CD14-positive monocyte (primary cell): ENCODE measurements at regions of chr10 and their contacts with region 1.

Region 1: DNA sequence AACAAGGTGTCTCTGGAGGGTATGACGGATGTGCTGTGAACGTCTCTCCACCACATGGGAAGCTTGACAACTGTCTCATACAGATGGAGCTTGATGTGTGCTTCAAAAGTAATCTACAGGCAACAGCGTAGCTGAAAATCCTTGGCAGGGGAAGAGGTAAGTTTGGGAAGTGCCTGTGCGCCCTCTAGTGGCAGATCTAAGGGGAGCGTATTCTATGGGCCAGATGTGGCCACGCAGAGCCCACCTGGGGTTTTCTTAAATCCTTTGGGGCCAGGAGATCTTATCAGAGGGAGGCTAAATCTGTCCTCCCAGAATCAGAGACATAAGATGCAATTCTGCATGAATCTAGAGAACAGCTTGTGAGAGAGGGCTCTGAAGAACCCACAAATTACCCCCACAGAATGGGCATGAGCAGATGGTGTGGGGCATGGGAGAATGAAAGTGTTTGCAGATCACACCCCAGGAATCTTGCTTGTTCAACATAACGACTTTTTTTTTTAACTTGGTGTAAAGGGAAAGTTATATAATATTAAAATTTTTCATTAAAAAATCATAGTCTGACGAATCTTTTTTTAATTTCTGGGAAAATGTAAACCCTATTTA is 91.2 kb upstream of the MPP7 start:
- DNase-seq: peak; percentile 67 to 79 (median 71)
- H3K4me3 ChIP-seq: no peak overlapping the region
- H3K4me3 Mint-ChIP-seq: no peak overlapping the region
- H3K27ac ChIP-seq: no peak overlapping the region
- H3K27ac Mint-ChIP-seq: peak overlapping the region in 5 of 7 donors; percentile 21 to 82 (median 35)
- H3K4me1 ChIP-seq: peaks cover 14 to 23% of the 10 kb centered on the region in 2 donors
- H3K4me1 Mint-ChIP-seq: peaks cover 22% of the 10 kb centered on the region
- H3K27me3 ChIP-seq: no peaks in the 10 kb centered on the region
- H3K27me3 Mint-ChIP-seq: peaks cover 0 to 3% (median 0%) of the 10 kb centered on the region in 3 donors
- CTCF ChIP-seq: peak; percentile 97

Region 2: DNA sequence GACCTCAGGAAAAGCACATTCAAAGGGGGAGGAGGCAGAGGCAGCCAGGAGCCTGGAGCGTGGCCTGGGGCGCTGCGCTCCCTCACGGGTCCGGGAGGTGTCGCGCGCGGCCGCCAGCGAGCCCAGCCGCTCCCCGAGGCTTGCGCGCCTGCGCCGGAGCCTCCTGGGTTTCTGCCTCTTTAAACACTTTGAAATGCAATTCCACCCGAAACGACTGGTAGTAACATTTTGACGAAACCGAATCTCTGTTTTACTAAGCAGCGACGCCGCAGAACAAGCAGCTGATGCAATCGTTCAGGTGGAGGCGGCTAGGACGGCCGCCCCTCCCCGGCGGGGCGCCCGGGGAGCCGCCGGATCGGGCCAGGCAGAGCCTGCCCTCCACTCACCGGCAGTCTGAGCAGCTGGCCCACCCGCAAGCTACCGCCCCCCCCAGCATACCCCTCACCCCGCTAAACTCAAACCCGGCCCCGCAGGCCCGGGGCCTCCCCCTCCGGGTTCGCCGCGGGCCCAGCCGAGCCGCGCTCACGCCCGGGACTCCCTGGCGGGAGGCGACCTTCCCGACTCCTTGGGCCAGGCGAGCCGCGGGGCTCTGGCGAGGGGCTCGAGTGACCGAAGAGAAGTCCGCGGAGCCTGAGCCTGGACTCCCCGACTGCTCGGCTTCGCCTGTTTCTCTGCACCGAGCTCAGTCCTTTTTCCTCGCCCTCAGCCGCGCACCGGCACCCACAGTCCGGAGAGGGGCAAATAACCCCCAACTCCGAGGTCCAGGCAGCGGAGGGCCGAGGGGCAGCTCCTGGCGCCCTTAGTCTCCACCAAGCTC is 651.7 kb before region 1 on chr10:
- intact Hi-C with region 1: loop called (anchors 10 kb)
- DNase-seq: peak; percentile 44 to 58 (median 47)
- H3K4me3 ChIP-seq: peak overlapping the region; percentile 51 to 87 (median 65)
- H3K4me3 Mint-ChIP-seq: peak overlapping the region; percentile 93 to 96
- H3K27ac ChIP-seq: no peak overlapping the region
- H3K27ac Mint-ChIP-seq: no peak overlapping the region
- H3K4me1 ChIP-seq: peaks cover 53 to 58% of the 10 kb centered on the region in 2 donors
- H3K4me1 Mint-ChIP-seq: peaks cover 50% of the 10 kb centered on the region
- H3K27me3 ChIP-seq: peaks cover 69 to 90% of the 10 kb centered on the region in 2 donors
- H3K27me3 Mint-ChIP-seq: peaks cover 63 to 83% (median 69%) of the 10 kb centered on the region in 3 donors
- CTCF ChIP-seq: peak; percentile 86

Region 3: DNA sequence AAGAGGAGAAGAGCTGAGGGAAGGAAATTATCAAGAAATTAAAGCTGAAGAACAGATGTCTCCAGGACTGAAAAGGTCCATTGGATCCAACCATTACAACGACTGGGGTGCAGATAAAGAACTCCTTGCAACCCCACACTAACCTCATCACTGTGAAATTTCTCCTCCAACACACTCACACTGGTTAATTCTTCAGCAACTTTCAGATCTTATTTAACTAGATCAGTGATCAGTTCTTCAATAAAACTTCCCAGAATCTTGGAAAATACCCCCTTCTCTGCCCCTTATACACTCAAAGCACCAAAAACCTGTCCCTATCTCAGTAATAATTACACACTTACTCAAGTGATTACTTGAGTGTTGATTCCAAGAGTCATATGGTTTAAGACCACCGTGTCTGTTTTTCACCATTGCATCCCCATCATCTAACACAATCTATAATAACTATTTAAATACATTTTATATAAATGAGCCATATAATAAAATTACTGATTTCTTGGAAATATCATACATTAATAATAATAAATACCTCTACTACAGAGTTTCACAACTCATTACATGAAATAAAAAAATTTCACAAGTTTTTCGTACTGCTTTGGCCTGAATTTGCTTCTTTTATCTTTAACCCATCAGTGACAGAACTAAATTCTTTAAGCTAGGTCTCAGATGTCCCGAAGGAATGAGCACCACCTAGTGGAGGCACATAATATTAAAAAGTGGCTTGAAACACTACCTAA is 214.9 kb before region 1 on chr10:
- intact Hi-C with region 1: loop called in 1 of 2 experiments (anchors 10 kb)
- DNase-seq: peak; percentile 17 to 51 (median 37)
- H3K4me3 ChIP-seq: no peak overlapping the region
- H3K4me3 Mint-ChIP-seq: no peak overlapping the region
- H3K27ac ChIP-seq: peak overlapping the region in 1 of 2 donors; percentile 68
- H3K27ac Mint-ChIP-seq: peak overlapping the region in 3 of 7 donors; percentile 32 to 73 (median 61)
- H3K4me1 ChIP-seq: peaks cover 8 to 14% of the 10 kb centered on the region in 2 donors
- H3K4me1 Mint-ChIP-seq: peaks cover 21% of the 10 kb centered on the region
- H3K27me3 ChIP-seq: no peaks in the 10 kb centered on the region
- H3K27me3 Mint-ChIP-seq: no peaks in the 10 kb centered on the region
- CTCF ChIP-seq: peak; percentile 94

Region 4: DNA sequence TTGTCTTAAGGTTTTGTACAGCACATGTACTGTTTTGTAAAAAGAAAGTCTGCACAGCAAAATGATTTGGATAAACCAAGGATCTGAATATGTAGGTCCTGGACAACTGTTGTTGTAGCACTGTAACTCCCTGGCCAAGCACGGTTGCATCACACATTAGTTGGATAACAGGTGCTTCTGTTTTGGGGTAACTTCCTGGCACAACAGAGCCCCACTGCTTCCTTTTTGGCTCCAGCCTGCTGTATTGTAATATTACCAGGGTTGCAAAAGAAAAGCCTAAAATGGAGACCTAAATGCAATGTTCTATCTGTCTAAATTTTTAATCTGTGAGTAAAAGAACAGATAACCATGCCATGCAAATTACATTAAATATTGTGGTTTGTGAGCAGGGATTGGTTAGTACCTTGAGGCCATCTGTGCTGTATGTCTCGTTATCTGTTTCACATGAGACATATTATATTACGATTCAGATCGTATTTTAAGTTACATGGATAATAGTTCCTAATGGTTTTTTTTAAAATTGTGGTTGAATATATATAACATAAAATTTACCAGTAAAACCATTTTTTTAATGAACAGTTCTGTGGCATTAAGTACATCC is 111.4 kb after region 1 on chr10:
- intact Hi-C with region 1: no loop called
- DNase-seq: no peak
- H3K4me3 ChIP-seq: no peak overlapping the region
- H3K4me3 Mint-ChIP-seq: no peak overlapping the region
- H3K27ac ChIP-seq: peak overlapping the region in 1 of 2 donors; percentile 46
- H3K27ac Mint-ChIP-seq: peak overlapping the region in 2 of 7 donors; percentile 31 to 64
- H3K4me1 ChIP-seq: peaks cover 14 to 16% of the 10 kb centered on the region in 2 donors
- H3K4me1 Mint-ChIP-seq: peaks cover 17% of the 10 kb centered on the region
- H3K27me3 ChIP-seq: no peaks in the 10 kb centered on the region
- H3K27me3 Mint-ChIP-seq: peaks cover 0 to 2% (median 0%) of the 10 kb centered on the region in 3 donors
- CTCF ChIP-seq: no peak

Region 5: DNA sequence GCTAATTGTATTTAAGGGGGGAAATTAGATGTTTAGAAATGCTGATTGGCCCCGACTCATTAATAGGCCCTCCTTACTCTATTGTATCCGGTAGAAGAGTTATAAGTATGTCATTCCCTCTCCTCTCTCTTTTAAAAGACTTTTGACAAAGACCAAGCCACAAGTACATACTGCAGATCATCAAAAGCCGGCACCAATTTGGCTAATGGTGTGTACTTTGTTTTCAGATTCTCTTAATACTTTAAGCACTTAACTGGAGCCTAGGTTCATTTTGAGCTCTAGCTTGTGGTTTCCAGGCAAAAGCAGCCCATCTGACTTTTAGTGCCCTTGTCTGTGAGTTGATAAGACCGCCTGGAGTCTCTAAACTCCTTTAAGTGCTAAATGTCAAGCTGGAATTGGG is 684.9 kb after region 1 on chr10:
- intact Hi-C with region 1: no loop called
- DNase-seq: no peak
- H3K4me3 ChIP-seq: no peak overlapping the region
- H3K4me3 Mint-ChIP-seq: no peak overlapping the region
- H3K27ac ChIP-seq: no peak overlapping the region
- H3K27ac Mint-ChIP-seq: no peak overlapping the region
- H3K4me1 ChIP-seq: no peaks in the 10 kb centered on the region
- H3K4me1 Mint-ChIP-seq: no peaks in the 10 kb centered on the region
- H3K27me3 ChIP-seq: no peaks in the 10 kb centered on the region
- H3K27me3 Mint-ChIP-seq: peaks cover 0 to 2% (median 0%) of the 10 kb centered on the region in 3 donors
- CTCF ChIP-seq: no peak